B cell (primary cell): ENCODE measurements at regions of chr7 and their contacts with region 1.

Region 1: DNA sequence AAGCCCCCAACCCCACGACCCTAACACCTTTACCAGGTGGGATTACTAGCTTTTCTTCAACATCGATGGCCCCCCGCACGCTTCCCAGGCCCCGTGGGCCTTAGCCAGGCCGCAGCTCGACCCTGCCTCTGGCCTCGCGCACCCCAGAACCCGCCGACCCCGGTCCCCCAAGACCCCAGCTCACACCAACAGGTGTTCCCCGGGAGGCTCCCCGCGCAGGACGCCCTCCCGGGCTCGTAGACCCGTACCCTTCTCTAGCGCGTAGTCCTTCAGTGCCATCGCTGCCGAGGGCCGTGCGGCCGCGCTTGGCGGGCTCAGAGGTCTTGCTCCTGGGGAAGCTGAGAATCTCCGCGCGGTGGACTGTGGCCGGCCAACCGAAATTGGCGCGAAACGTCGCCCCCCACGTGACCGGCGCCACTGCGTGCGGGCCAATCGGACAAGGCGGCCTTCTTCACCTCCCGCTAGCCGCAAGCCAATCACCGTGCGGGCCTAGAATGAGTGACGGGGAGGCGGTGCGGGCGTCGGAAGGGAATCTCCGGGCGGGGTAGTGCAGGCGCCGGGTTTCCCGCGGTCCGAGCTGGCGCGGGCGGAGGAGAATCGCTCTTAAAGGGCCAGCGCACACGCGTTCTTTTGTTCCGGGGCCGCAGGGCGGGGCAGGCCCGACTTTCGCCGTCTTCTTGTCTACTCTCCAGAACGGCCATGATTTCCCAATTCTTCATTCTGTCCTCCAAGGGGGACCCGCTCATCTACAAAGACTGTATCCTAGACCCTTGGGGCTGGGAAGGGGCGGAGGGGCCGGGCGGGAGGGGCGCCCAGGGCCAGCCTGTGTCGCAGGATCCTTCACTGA is at the starts of genes AP4M1 and MCM7:
- DNase-seq: peak; percentile 97
- ATAC-seq: peak; percentile 86
- H3K4me3 ChIP-seq: peak within 1 kb of the TSS; percentile 85 to 92 (median 90)
- H3K4me3 Mint-ChIP-seq: peak within 1 kb of the TSS; percentile 96
- H3K27ac ChIP-seq: peak within 1 kb of the TSS; percentile 60 to 94
- H3K27ac Mint-ChIP-seq: peak within 1 kb of the TSS; percentile 98
- H3K4me1 ChIP-seq: peaks cover 13 to 24% of the 10 kb centered on the region in 2 donors
- H3K4me1 Mint-ChIP-seq: peaks cover 40% of the 10 kb centered on the region
- H3K27me3 ChIP-seq: no peaks in the 10 kb centered on the region
- H3K27me3 Mint-ChIP-seq: no peaks in the 10 kb centered on the region
- CTCF ChIP-seq: no peak
- total RNA-seq, gene AP4M1: 17.6 and 18.3 TPM in 2 replicates
- total RNA-seq, gene MCM7: 147 and 154 TPM in 2 replicates

Region 2: GRCh38 chr7:100088621-100089457 is 12.4 kb before region 1 on chr7 and contains the start of gene COPS6:
- CTCF ChIA-PET with region 1: interaction called, 3 read pairs
- POLR2A ChIA-PET with region 1: interaction called, 10 read pairs
- intact Hi-C with region 1: loop called (anchors 1 kb)
- DNase-seq: peak; percentile 90
- ATAC-seq: peak; percentile 90
- H3K4me3 ChIP-seq: peak within 1 kb of the TSS; percentile 68 to 91 (median 74)
- H3K4me3 Mint-ChIP-seq: peak within 1 kb of the TSS; percentile 93
- H3K27ac ChIP-seq: peak within 1 kb of the TSS; percentile 66 to 77
- H3K27ac Mint-ChIP-seq: peak within 1 kb of the TSS; percentile 96
- H3K4me1 ChIP-seq: peaks cover 14 to 18% of the 10 kb centered on the region in 2 donors
- H3K4me1 Mint-ChIP-seq: peaks cover 19% of the 10 kb centered on the region
- H3K27me3 ChIP-seq: no peaks in the 10 kb centered on the region
- H3K27me3 Mint-ChIP-seq: no peaks in the 10 kb centered on the region
- CTCF ChIP-seq: no peak
- total RNA-seq, gene COPS6: 75.1 and 79.6 TPM in 2 replicates

Region 3: DNA sequence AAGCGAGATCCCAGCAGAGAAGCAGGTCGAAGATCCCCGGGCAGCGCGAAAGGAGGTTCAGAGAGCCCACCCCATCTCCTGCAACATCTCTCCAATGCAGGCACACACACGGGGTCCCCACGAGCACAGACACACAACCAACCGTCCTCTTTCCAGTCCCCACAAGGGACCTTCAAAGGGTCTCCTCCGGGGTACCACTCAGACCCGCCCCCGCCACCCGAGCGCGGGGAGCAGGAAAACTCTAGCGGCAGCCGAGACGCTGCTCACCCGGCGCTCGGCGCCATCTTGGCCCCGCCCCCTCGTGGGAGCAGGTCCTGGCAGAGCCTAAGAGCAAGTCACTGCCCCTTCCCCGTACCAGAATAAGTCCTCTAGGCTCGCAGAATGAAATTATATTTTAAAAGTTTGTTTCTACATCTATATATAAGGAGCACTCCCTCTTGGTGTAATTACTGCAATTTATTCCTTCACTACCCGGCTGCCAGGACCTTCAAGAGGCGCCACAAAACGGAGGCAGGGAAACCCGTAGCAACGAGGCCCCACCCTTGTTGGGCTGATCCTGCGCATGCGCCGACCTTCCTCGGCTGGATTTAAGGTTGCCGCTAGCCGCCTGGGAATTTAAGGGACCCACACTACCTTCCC is 17.9 kb after region 1 on chr7 and contains the starts of genes CNPY4 and TAF6:
- CTCF ChIA-PET with region 1: interaction called, 6 read pairs
- POLR2A ChIA-PET with region 1: interaction called, 14 read pairs
- intact Hi-C with region 1: loop called (anchors 1 kb)
- DNase-seq: peak; percentile 97
- ATAC-seq: peak; percentile 85
- H3K4me3 ChIP-seq: peak within 1 kb of the TSS; percentile 67 to 94 (median 92)
- H3K4me3 Mint-ChIP-seq: peak within 1 kb of the TSS; percentile 98
- H3K27ac ChIP-seq: peak within 1 kb of the TSS; percentile 93 to 97
- H3K27ac Mint-ChIP-seq: peak within 1 kb of the TSS; percentile 95
- H3K4me1 ChIP-seq: peaks cover 14 to 20% of the 10 kb centered on the region in 2 donors
- H3K4me1 Mint-ChIP-seq: peaks cover 28% of the 10 kb centered on the region
- H3K27me3 ChIP-seq: no peaks in the 10 kb centered on the region
- H3K27me3 Mint-ChIP-seq: no peaks in the 10 kb centered on the region
- CTCF ChIP-seq: peak; percentile 14
- total RNA-seq, gene CNPY4: 13.9 and 16.8 TPM in 2 replicates
- total RNA-seq, gene TAF6: 65.2 and 65.8 TPM in 2 replicates

Region 4: DNA sequence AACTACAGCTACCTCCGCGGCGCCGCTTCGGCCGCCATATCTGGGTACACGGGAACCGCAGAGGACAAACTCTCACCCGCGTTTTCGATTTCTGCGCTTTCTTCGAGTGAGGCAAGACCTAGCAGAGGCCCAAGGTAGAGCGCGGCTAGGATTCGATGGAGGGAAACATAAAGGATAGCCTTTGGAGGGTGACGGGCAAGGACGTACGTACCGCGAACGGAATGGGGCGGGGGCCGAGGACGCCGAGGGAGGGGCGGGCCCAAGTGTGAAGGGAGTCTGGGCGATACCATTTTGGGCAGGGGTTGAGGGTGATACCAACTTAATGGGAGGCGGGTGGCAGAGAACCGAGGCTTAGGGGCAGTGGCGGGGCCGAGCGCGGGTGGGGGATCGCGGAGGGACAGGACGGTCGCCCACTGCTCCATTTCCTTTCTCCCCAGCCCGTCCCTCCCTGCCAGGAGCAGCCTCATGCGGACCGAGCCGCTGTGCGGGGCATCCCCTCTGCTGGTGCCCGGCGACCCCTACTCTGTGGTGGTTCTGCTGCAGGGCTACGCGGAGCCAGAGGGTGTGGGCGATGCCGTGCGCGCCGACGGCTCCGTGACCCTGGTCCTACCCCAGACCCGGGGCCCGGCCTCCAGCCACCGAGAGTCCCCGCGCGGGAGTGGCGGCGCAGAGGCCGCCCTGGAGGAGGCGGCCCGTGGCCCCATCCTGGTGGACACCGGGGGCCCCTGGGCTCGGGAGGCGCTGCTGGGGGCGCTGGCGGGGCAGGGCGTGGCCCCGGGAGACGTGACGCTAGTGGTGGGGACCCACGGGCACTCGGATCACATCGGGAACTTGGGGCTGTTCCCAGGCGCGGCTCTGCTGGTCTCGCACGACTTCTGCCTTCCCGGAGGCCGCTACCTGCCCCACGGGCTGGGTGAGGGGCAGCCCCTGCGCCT is 26.0 kb after region 1 on chr7 and contains the start of gene MBLAC1:
- CTCF ChIA-PET with region 1: interaction called, 43 read pairs
- POLR2A ChIA-PET with region 1: interaction called, 37 read pairs
- intact Hi-C with region 1: loop called (anchors 1 kb)
- DNase-seq: peak; percentile 97
- ATAC-seq: peak; percentile 83
- H3K4me3 ChIP-seq: peak within 1 kb of the TSS; percentile 54 to 84 (median 78)
- H3K4me3 Mint-ChIP-seq: peak within 1 kb of the TSS; percentile 100
- H3K27ac ChIP-seq: peak within 1 kb of the TSS; percentile 83 to 95
- H3K27ac Mint-ChIP-seq: peak within 1 kb of the TSS; percentile 100
- H3K4me1 ChIP-seq: peaks cover 20 to 36% of the 10 kb centered on the region in 2 donors
- H3K4me1 Mint-ChIP-seq: peaks cover 31% of the 10 kb centered on the region
- H3K27me3 ChIP-seq: no peaks in the 10 kb centered on the region
- H3K27me3 Mint-ChIP-seq: no peaks in the 10 kb centered on the region
- CTCF ChIP-seq: no peak
- total RNA-seq, gene MBLAC1: 4.5 TPM in 2 replicates